Heart right ventricle (tissue), 16 donors: ENCODE measurements at regions of chr2 and their contacts with region 1.

Region 1: GRCh38 chr2:179226203-179226960 is 38.2 kb downstream of the SESTD1 start:
- DNase-seq: peak in 1 of 2 donors; percentile 26
- ATAC-seq: peak in 3 of 8 donors; percentile 58 to 80 (median 60)
- H3K4me3 ChIP-seq: no peak overlapping the region
- H3K27ac ChIP-seq: peak overlapping the region in 1 of 10 donors; percentile 11
- H3K4me1 ChIP-seq: peaks cover 0 to 52% (median 25%) of the 10 kb centered on the region in 9 donors
- H3K27me3 ChIP-seq: no peaks in the 10 kb centered on the region
- CTCF ChIP-seq: no peak

Region 2: GRCh38 chr2:179340668-179341067 is 114.3 kb after region 1 on chr2:
- intact Hi-C with region 1: loop called in 3 of 10 experiments (anchors 5 to 10 kb)
- DNase-seq: no peak
- ATAC-seq: no peak
- H3K4me3 ChIP-seq: no peak overlapping the region
- H3K27ac ChIP-seq: no peak overlapping the region
- H3K4me1 ChIP-seq: peaks cover 0 to 19% (median 5%) of the 10 kb centered on the region in 9 donors
- H3K27me3 ChIP-seq: no peaks in the 10 kb centered on the region
- CTCF ChIP-seq: peak in 7 of 9 donors; percentile 20 to 51 (median 37)

Region 3: GRCh38 chr2:179410552-179411356 is 184.4 kb after region 1 on chr2:
- intact Hi-C with region 1: loop called in 2 of 10 experiments (anchors 10 kb)
- DNase-seq: peak in 1 of 2 donors; percentile 26
- ATAC-seq: peak in 3 of 8 donors; percentile 47 to 73 (median 61)
- H3K4me3 ChIP-seq: no peak overlapping the region
- H3K27ac ChIP-seq: no peak overlapping the region
- H3K4me1 ChIP-seq: no peaks in the 10 kb centered on the region
- H3K27me3 ChIP-seq: peaks cover 0 to 24% (median 7%) of the 10 kb centered on the region in 7 donors
- CTCF ChIP-seq: peak; percentile 42 to 81 (median 71)

Region 4: DNA sequence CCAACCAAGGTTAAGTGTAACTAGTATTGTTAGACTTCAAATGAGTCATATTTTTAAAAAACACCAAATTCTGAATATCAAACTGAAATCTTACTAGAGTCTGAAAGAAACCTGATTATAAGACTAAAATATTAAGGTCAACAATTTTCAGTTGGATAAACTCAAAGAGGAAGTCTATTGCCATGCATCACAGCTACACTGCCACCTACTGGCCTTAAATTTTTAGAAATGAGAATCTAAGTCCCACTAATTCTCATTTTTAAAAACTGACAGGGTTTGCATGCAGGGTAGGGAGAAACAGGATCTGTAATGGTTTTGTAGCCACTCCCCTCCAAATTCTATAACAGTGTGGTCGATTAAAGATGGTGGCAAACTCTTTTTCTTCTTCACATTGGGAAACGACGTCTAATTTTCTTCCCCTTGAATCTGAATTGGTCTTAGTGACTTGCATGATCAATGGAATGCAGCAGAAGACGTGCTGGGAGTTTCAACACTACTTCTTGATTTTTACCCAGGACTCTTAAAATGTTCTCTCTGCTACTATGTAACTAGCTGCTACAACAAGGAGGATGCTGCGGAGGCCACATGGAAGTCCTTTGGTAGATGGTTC is 214.4 kb after region 1 on chr2:
- intact Hi-C with region 1: loop called in 6 of 10 experiments (anchors 2 to 10 kb)
- DNase-seq: no peak
- ATAC-seq: peak in 1 of 8 donors; percentile 15
- H3K4me3 ChIP-seq: no peak overlapping the region
- H3K27ac ChIP-seq: no peak overlapping the region
- H3K4me1 ChIP-seq: peaks cover 0 to 14% (median 0%) of the 10 kb centered on the region in 9 donors
- H3K27me3 ChIP-seq: peaks cover 0 to 8% (median 0%) of the 10 kb centered on the region in 7 donors
- CTCF ChIP-seq: peak in 8 of 9 donors; percentile 36 to 74 (median 65)